ENCODE measurements at regions of chr7 and their contacts with region 1.

Region 1: GRCh38 chr7:99098824-99099498 is 44.9 kb downstream of the SMURF1 start:
- DNase-seq: peak; percentile 56
- ATAC-seq: no peak
- H3K4me3 ChIP-seq: no peak overlapping the region
- H3K27ac ChIP-seq: no peak overlapping the region
- H3K4me1 ChIP-seq: peaks cover 40% of the 10 kb centered on the region
- H3K27me3 ChIP-seq: no peaks in the 10 kb centered on the region
- CTCF ChIP-seq: no peak

Region 2: DNA sequence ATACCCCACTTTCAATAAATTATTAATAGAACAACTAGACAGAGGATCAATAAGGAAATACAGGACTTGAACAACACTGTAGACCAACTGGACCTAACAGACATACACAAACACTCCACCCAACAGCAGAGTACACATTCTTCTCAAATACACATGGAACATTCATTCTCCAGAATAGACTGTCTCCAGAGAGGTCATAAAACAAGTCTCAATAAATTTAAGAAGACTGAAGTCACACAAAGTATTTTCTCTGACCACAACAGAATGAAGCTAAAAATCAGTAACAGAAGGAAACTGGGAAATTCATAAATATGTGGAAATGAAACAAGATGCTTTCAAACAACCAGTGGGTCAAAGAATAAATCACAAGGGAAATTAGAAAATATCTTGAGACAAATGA is 74.9 kb before region 1 on chr7:
- CTCF ChIA-PET with region 1: no interaction called
- POLR2A ChIA-PET with region 1: no interaction called
- intact Hi-C with region 1: no loop called
- DNase-seq: no peak
- ATAC-seq: no peak
- H3K4me3 ChIP-seq: no peak overlapping the region
- H3K27ac ChIP-seq: no peak overlapping the region
- H3K4me1 ChIP-seq: no peaks in the 10 kb centered on the region
- H3K27me3 ChIP-seq: no peaks in the 10 kb centered on the region
- CTCF ChIP-seq: no peak

Region 3: DNA sequence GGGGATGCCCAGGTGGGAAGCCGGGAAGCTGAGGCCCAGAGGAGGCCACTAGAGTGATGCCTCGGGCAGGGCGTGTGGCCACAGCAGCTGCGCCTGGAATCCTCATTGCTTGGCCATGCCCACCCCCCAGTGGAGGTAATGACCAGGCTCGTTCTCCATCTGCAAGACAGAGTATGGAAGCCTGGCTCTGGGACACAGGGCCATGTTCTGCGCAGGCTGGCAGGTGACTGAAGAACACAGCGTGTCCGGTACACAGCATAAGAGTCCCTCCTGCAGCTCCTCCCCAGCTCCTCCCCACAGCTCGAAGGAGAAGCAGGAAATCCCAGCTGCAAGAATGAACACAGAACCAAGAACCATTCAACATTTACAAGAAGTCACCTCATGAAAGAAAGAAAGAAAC is 19.9 kb before region 1 on chr7:
- CTCF ChIA-PET with region 1: interaction called, 3 read pairs
- POLR2A ChIA-PET with region 1: no interaction called
- intact Hi-C with region 1: loop called (anchors 2 kb)
- DNase-seq: no peak
- ATAC-seq: peak; percentile 29; the same call in 1 of the 2 replicates
- H3K4me3 ChIP-seq: no peak overlapping the region
- H3K27ac ChIP-seq: no peak overlapping the region
- H3K4me1 ChIP-seq: peaks cover 18% of the 10 kb centered on the region
- H3K27me3 ChIP-seq: no peaks in the 10 kb centered on the region
- CTCF ChIP-seq: no peak

Region 4: DNA sequence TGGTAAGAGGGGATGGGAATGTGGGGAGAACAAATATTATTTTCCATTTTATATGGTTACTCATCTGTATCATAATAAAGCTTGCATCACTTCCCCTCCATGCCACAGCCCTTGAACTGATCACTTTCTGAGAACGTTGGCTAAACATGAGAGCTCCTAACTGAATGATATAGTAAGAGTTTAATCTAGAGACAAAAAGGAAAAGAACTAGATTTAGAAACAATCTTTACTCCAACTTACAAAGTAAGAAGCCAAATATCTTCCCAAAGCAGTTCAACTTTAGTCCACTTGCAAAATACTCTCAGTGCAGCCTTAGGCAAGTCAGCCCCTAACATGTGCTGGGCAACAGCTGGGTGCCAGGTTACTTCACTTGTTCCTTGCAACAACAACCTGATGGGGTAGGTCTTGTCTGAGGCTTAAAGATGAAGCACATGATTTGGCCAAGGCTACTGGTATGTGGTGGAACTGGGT is 24.6 kb after region 1 on chr7:
- CTCF ChIA-PET with region 1: no interaction called
- POLR2A ChIA-PET with region 1: no interaction called
- intact Hi-C with region 1: loop called (anchors 1 kb)
- DNase-seq: peak; percentile 81
- ATAC-seq: peak; percentile 74
- H3K4me3 ChIP-seq: peak overlapping the region; percentile 25; the same call in 1 of the 2 replicates
- H3K27ac ChIP-seq: peak overlapping the region; percentile 93
- H3K4me1 ChIP-seq: peaks cover 46% of the 10 kb centered on the region
- H3K27me3 ChIP-seq: no peaks in the 10 kb centered on the region
- CTCF ChIP-seq: no peak

Region 5: GRCh38 chr7:99312316-99313203 is 213.6 kb after region 1 on chr7:
- CTCF ChIA-PET with region 1: no interaction called
- POLR2A ChIA-PET with region 1: no interaction called
- intact Hi-C with region 1: loop called (anchors 2 kb)
- DNase-seq: peak; percentile 86
- ATAC-seq: peak; percentile 60
- H3K4me3 ChIP-seq: no peak overlapping the region
- H3K27ac ChIP-seq: no peak overlapping the region
- H3K4me1 ChIP-seq: peaks cover 22% of the 10 kb centered on the region; the same call in 1 of the 2 replicates
- H3K27me3 ChIP-seq: no peaks in the 10 kb centered on the region
- CTCF ChIP-seq: peak; percentile 92